SK-N-SH (cell line): ENCODE measurements at regions of chr17 and their contacts with region 1.

Region 1: GRCh38 chr17:46002311-46002972 is 3.4 kb downstream of the STH start:
- DNase-seq: peak; percentile 89
- H3K4me3 ChIP-seq: no peak overlapping the region
- H3K27ac ChIP-seq: no peak overlapping the region
- H3K4me1 ChIP-seq: peaks cover 0 to 9% of the 10 kb centered on the region in 2 experiments; a peak in 1 of 4 replicates
- H3K27me3 ChIP-seq: no peaks in the 10 kb centered on the region
- CTCF ChIP-seq: peak; percentile 98
- EP300 ChIP-seq: no peak
- RAD21 ChIP-seq: peak; percentile 96

Region 2: DNA sequence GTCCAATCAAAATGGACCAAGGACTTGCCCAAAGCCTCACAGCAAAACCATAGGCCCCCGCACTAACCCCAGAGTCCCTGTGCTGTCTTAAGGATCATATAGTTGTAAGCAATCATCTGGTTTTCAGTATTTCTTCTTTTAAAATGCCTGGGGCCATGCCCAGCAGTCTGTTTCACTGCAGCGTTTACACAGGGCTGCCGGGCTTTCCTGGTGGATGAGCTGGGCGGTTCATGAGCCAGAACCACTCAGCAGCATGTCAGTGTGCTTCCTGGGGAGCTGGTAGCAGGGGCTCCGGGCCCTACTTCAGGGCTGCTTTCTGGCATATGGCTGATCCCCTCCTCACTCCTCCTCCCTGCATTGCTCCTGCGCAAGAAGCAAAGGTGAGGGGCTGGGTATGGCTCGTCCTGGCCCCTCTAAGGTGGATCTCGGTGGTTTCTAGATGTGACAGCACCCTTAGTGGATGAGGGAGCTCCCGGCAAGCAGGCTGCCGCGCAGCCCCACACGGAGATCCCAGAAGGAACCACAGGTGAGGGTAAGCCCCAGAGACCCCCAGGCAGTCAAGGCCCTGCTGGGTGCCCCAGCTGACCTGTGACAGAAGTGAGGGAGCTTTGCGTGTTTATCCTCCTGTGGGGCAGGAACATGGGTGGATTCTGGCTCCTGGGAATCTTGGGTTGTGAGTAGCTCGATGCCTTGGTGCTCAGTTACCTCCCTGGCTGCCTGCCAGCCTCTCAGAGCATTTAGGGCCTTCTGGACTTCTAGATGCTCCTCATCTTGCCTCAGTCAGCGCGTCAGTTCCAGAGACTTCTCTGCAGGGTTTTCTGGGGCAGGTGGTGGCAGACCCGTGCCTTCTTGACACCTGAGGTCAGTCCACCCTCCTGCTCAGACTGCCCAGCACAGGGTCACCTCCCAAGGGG is 28.2 kb before region 1 on chr17:
- CTCF ChIA-PET with region 1: interaction called, 13 read pairs
- POLR2A ChIA-PET with region 1: no interaction called
- DNase-seq: no peak
- H3K4me3 ChIP-seq: no peak overlapping the region
- H3K27ac ChIP-seq: no peak overlapping the region
- H3K4me1 ChIP-seq: no peaks in the 10 kb centered on the region; a peak in 1 of 4 replicates
- H3K27me3 ChIP-seq: no peaks in the 10 kb centered on the region
- CTCF ChIP-seq: no peak
- EP300 ChIP-seq: no peak
- RAD21 ChIP-seq: no peak

Region 3: DNA sequence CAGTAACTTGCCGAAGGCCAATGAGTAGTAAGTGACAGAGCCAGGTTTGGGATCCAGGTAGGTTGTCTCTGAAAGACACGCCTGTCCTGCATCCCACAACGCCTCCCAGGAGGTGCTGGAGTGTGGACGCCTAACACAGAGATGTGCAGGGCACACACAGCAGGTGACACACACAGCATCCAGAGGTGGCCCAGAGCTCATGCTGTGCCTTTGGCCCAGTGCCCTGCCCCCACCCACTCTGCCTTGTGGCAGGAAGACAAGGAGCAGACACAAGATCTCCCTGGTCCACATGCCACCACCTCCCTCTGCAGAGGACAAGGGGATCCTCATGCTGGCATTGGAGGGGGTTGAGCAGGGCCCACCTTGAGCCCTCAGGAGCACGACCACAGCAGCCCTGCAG is 18.1 kb before region 1 on chr17:
- CTCF ChIA-PET with region 1: interaction called, 37 read pairs
- POLR2A ChIA-PET with region 1: no interaction called
- DNase-seq: no peak
- H3K4me3 ChIP-seq: no peak overlapping the region
- H3K27ac ChIP-seq: no peak overlapping the region
- H3K4me1 ChIP-seq: no peaks in the 10 kb centered on the region; a peak in 1 of 4 replicates
- H3K27me3 ChIP-seq: peaks cover 7% of the 10 kb centered on the region; the same call in 1 of the 2 replicates
- CTCF ChIP-seq: no peak
- EP300 ChIP-seq: no peak
- RAD21 ChIP-seq: no peak

Region 4: GRCh38 chr17:45990886-45991285 is 11.6 kb before region 1 on chr17:
- CTCF ChIA-PET with region 1: interaction called, 37 read pairs
- POLR2A ChIA-PET with region 1: no interaction called
- DNase-seq: no peak
- H3K4me3 ChIP-seq: no peak overlapping the region
- H3K27ac ChIP-seq: no peak overlapping the region
- H3K4me1 ChIP-seq: peaks cover 0 to 5% of the 10 kb centered on the region in 2 experiments; a peak in 1 of 4 replicates
- H3K27me3 ChIP-seq: no peaks in the 10 kb centered on the region
- CTCF ChIP-seq: no peak; the same call in 1 of the 2 replicates
- EP300 ChIP-seq: no peak
- RAD21 ChIP-seq: peak; percentile 19

Region 5: GRCh38 chr17:46013502-46014165 is 11.2 kb after region 1 on chr17:
- CTCF ChIA-PET with region 1: interaction called, 13 read pairs
- POLR2A ChIA-PET with region 1: no interaction called
- DNase-seq: peak; percentile 65
- H3K4me3 ChIP-seq: no peak overlapping the region
- H3K27ac ChIP-seq: peak overlapping the region in 1 of 2 experiments; percentile 70; a peak in 2 of 4 replicates
- H3K4me1 ChIP-seq: peaks cover 0 to 23% of the 10 kb centered on the region in 2 experiments; a peak in 1 of 4 replicates
- H3K27me3 ChIP-seq: no peaks in the 10 kb centered on the region
- CTCF ChIP-seq: no peak
- EP300 ChIP-seq: 0 out of 4 replicates have a peak, but pooled peaks of 1 of the 2 experiments have one; percentile 2
- RAD21 ChIP-seq: no peak

Region 6: DNA sequence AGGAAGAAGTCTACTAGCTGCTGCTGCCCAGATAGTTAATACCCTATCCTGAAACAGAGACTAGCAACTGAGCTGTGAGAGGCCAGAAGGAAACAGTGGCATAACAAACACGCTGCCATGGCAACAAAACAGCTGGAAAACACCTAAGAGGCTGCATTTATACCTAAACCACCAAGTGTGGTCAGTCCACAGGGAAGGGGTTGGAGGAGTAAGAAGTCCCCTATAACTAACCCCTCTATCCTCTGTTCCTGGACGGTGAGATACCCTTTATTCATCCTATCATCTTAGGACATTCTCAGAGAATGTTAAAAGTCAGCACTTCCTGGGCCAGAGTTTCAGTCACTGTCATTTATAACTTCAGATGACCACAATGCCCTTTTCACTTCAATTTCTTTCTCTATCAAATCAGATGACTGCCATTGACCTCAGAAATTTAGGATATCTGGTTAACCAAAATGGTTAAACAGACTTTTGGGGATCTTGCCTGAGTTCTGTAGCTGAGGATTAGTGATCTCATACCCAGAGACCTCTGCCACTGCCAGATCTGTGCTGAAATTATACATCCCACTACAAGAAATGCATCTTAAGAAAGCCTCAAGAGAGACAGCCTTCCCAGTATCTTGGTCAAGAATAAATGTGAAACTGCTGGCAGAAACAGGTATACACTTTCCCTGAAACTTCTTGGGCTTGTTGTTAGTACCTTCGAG is 32.8 kb after region 1 on chr17:
- CTCF ChIA-PET with region 1: interaction called, 21 read pairs
- POLR2A ChIA-PET with region 1: no interaction called
- DNase-seq: no peak
- H3K4me3 ChIP-seq: no peak overlapping the region
- H3K27ac ChIP-seq: no peak overlapping the region
- H3K4me1 ChIP-seq: peaks cover 0 to 23% of the 10 kb centered on the region in 2 experiments; a peak in 2 of 4 replicates
- H3K27me3 ChIP-seq: no peaks in the 10 kb centered on the region
- CTCF ChIP-seq: no peak
- EP300 ChIP-seq: no peak
- RAD21 ChIP-seq: no peak

Region 7: DNA sequence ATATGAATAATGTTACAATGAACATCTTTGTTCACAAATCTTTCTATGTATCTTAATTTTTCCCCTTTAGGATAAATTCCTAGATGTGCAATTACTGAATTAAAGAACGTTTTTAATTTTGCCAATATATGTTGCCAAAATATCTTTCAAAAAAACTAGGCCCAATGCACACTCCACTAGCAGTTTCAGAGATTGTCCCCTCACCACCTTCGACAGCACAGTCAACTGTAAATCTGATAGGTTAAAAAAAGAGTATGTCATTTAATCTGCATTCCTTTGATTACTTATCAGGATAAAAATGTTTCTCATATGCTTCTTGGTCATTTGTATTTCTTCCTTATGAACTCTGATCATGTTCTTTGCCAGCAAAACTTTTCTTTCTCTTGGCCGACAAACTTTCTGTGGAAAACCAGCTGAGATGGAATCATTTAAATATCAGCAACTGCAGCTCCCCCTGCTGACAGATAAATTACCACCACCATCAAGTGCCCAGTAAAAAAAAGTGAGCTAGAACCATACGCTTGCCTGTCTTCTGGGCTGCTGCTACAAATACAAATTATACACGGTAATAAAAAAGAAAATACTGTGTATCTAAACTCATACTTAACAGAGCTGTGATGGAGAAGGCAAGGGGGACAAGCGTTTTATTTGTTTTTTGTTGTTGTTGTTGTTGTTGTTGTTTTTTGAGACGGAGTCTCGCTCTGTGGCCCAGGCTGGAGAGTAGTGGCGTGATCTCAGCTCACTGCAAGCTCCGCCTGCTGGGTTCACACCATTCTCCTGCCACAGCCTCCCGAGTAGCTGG is 210.4 kb after region 1 on chr17:
- CTCF ChIA-PET with region 1: interaction called, 104 read pairs
- POLR2A ChIA-PET with region 1: no interaction called
- DNase-seq: peak; percentile 77
- H3K4me3 ChIP-seq: peak overlapping the region in 1 of 2 experiments; percentile 16; a peak in 1 of 4 replicates
- H3K27ac ChIP-seq: no peak overlapping the region
- H3K4me1 ChIP-seq: no peaks in the 10 kb centered on the region
- H3K27me3 ChIP-seq: no peaks in the 10 kb centered on the region
- CTCF ChIP-seq: peak; percentile 98
- EP300 ChIP-seq: no peak
- RAD21 ChIP-seq: peak; percentile 83